Activated B cell treated with CpG ODN at 0.5 μM for 24 hours (primary cell): ENCODE measurements at regions of chr1 and their contacts with region 1.

Region 1: GRCh38 chr1:184973272-184974055 is 844 bp downstream of the NIBAN1 start:
- DNase-seq: peak; percentile 61
- ATAC-seq: peak; percentile 51
- H3K4me3 Mint-ChIP-seq: peak overlapping the region; percentile 93
- H3K27ac Mint-ChIP-seq: peak overlapping the region; percentile 91
- H3K4me1 Mint-ChIP-seq: peaks cover 59% of the 10 kb centered on the region
- H3K27me3 Mint-ChIP-seq: peaks cover 2% of the 10 kb centered on the region
- CTCF ChIP-seq: no peak

Region 2: GRCh38 chr1:184754476-184755225 is 218.8 kb before region 1 on chr1 and contains the start of gene EDEM3:
- CTCF ChIA-PET with region 1: no interaction called
- POLR2A ChIA-PET with region 1: interaction called, 5 read pairs
- intact Hi-C with region 1: loop called (anchors 1 kb)
- DNase-seq: peak; percentile 90
- ATAC-seq: peak; percentile 95
- H3K4me3 Mint-ChIP-seq: peak within 1 kb of the TSS; percentile 95
- H3K27ac Mint-ChIP-seq: peak within 1 kb of the TSS; percentile 86
- H3K4me1 Mint-ChIP-seq: peaks cover 23% of the 10 kb centered on the region
- H3K27me3 Mint-ChIP-seq: peaks cover under 1% of the 10 kb centered on the region
- CTCF ChIP-seq: no peak
- total RNA-seq, gene EDEM3: 11.5 and 16.2 TPM in 2 replicates

Region 3: DNA sequence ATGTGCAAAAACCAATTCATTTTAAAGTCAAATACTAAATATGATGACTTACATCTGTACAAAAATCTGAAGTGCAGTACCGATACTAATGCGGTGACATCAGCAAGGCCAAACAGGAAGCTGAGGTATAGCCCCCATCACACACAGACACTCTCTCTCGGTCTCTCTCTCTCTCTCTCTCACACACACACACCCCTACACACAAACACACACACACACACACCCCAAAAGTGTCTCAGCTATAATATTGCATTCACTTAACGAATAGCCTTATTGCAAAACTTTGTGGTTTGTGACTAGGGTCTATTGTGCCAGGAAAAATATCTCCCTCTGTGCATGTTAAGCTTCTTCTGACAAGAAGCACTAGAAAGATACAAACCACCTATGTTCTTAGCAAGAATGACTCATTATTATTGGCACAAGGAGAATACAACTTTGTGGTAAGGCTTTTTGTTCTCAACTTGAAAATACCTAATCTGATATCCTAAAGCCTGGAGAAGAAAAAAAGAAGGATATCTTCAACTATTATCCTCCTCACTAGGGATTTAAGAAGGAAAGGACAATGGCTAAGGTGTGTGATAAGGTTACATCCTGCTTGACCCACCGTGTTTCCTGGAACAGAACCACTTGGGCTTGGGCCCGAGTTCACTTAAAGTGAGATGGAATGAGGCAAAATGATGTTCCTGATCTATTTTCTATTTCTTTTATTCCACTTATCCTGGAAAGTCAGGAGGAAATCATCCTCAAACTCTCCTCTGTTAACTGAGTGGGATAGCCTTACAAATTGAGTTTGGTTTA is 106.3 kb before region 1 on chr1:
- CTCF ChIA-PET with region 1: interaction called, 3 read pairs
- POLR2A ChIA-PET with region 1: interaction called, 9 read pairs
- intact Hi-C with region 1: loop called (anchors 5 kb)
- DNase-seq: no peak
- ATAC-seq: peak; percentile 93
- H3K4me3 Mint-ChIP-seq: peak overlapping the region; percentile 26
- H3K27ac Mint-ChIP-seq: peak overlapping the region; percentile 77
- H3K4me1 Mint-ChIP-seq: peaks cover 34% of the 10 kb centered on the region
- H3K27me3 Mint-ChIP-seq: no peaks in the 10 kb centered on the region
- CTCF ChIP-seq: no peak

Region 4: DNA sequence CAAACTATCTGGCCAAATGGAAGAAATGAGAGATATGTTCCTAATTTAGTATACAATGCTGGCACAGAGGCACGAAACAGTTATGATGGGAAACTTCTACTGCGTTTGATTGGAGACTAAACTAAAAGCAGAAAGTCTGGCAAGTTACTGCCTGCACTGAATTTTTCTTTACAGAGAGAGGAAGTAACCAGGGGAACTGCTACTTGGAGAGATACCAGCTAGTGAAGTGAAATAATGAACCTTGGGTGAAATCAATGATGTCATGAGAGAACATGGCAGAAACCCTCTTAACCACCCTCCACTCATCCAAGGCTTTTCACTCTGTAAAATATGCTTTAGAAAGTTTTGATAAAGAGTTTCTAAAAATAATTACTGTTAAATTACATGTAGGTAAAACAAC is 28.4 kb before region 1 on chr1:
- CTCF ChIA-PET with region 1: no interaction called
- POLR2A ChIA-PET with region 1: interaction called, 4 read pairs
- intact Hi-C with region 1: loop called (anchors 1 kb)
- DNase-seq: no peak
- ATAC-seq: peak; percentile 62
- H3K4me3 Mint-ChIP-seq: no peak overlapping the region
- H3K27ac Mint-ChIP-seq: no peak overlapping the region
- H3K4me1 Mint-ChIP-seq: peaks cover 50% of the 10 kb centered on the region
- H3K27me3 Mint-ChIP-seq: no peaks in the 10 kb centered on the region
- CTCF ChIP-seq: no peak

Region 5: DNA sequence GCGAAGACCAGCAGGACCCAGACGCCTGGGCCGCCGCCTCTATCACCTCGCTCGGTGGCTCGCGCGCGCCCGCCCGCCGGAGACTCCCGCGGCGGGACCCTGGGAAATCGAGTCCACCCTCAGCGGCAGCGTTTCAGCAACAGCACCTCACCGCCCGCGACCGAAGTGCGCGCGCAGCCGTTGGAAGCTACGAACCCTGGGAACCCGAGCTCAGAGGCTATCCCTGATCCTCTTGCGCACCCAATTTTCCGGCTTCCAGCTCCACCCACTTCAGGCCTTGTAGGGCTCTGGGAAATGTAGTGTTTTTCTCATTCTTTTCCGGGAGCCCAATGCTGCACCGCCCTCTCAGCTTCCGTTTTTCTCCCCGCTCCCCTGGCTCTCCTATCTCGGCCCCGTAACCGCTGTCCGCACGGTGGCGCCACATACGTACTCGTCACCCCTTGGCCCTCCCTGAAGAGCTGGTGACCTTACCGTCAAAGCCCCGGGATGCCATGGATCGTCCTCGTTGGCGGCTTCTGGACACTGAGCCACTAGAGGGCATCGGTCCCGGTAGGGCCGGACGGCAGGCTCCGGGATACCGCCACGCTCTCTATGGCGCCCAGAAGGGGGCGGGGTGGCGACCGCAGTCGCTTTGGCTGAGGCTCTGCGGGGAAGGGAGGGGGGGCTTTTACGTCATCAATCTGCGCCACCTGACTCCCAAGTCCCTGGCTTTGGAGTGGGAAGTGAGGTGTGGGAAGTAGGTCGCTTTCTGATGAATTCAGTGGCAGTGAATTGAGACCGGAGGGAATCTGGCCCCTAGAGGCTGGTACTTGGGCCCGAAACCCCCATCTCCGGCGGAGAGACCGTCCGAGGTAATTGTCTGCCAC is 1401.9 kb after region 1 on chr1 and contains the starts of genes ODR4 and TPR:
- CTCF ChIA-PET with region 1: interaction called, 3 read pairs
- POLR2A ChIA-PET with region 1: interaction called, 3 read pairs
- intact Hi-C with region 1: loop called (anchors 1 kb)
- DNase-seq: peak; percentile 93
- ATAC-seq: peak; percentile 82
- H3K4me3 Mint-ChIP-seq: peak within 1 kb of the TSS; percentile 92
- H3K27ac Mint-ChIP-seq: peak within 1 kb of the TSS; percentile 92
- H3K4me1 Mint-ChIP-seq: peaks cover 31% of the 10 kb centered on the region
- H3K27me3 Mint-ChIP-seq: no peaks in the 10 kb centered on the region
- CTCF ChIP-seq: peak; percentile 53
- total RNA-seq, gene ODR4: 11.9 and 15.6 TPM in 2 replicates
- total RNA-seq, gene TPR: 112 and 125 TPM in 2 replicates